ENCODE measurements at regions of chr6 and their contacts with region 1.

Region 1: GRCh38 chr6:27479319-27480182 is 6.6 kb upstream of the ZNF184 start:
- DNase-seq: peak; percentile 90
- H3K4me3 Mint-ChIP-seq: no peak overlapping the region
- H3K27ac Mint-ChIP-seq: no peak overlapping the region
- H3K4me1 Mint-ChIP-seq: peaks cover 6% of the 10 kb centered on the region
- H3K27me3 Mint-ChIP-seq: no peaks in the 10 kb centered on the region

Region 2: DNA sequence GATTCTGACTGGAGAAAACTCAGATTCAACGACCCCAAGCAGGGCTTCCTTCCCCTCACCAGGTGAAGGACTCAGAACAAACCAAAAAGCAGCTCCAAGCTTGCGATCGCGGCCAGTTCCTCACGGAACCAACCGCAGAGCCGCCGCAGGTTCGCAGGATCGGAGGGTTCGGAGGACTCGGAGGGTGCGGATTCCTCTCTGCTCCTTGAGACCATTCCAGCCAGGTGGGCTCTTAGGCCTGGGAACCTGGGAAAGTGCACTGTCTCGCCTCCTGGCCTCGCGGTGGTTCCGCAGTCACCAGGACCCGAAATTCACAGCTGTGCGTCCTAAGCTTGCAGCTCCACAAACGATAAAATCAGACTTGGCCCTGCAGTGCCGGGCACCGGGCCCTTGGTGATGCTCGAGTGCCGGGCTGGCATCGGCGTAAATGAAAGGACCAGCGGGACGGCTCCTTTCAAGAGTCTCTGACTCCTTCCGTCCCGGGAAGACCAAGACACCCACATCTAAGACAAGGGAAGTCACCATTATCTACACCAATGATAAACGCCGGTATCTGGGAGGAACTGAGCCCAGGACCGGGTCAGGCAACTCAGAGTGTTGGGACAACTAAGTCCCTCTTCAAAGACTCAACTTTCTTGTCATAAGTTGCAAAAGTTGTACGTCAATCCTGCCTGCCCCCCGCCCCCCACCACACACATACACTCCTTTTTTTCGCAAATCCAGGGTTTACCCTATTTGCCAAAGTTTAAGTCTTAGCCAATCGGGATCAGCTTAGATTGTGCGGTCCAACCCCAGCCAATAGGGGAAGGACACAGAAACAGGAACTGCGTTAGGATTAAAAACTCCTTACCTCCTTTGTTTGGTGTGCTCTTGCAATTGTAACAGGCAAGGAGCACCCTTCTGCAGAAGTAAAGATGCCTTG is 301.8 kb before region 1 on chr6:
- CTCF ChIA-PET with region 1: no interaction called
- intact Hi-C with region 1: loop called (anchors 2 kb)
- DNase-seq: peak; percentile 83
- H3K4me3 Mint-ChIP-seq: peak overlapping the region; percentile 92
- H3K27ac Mint-ChIP-seq: peak overlapping the region; percentile 87
- H3K4me1 Mint-ChIP-seq: peaks cover 4% of the 10 kb centered on the region
- H3K27me3 Mint-ChIP-seq: peaks cover 6% of the 10 kb centered on the region

Region 3: DNA sequence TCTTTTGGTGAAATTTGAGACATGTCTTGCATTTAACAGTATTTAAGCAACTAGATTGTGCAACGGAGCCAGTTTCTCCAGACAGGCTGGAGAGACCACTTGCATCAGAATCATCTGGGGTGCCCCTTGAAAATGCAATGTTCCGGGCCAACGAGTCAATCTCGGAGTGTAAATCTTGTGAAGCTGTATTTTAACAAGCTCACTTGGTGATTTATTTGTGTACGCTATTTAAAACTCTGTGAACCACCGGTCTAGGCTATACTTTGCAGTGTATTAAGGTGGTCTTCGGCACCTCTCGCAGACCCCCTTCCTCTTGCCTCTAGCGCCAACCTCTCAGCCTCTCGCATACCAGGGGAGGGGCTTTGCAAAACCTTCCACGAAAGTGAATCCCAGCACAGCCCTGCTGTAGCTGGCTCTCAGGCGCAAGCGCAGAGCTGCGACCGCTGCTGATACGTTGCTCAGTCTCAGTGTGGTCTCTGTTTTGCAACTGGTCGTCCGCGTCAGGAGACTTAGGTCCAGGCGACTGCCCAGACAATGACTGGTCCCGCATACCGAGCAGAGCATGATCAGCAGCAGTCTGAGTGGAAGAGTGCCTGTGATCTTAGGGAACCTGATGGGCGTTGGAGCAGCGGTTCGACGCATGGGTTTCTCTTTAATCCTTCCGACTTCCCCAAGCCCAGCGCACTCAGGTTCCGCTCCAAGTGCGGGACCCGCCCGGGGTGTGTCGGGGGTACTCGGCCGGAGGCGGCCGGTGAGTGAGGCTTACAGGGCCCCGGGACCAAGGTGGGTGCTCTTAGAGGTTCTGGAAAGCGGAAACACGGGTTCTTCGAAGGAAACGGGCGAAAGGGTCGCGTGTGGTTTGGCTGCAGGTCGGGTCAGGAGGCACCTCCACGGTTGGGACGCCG is 91.0 kb before region 1 on chr6 and contains the start of gene ZNF391:
- CTCF ChIA-PET with region 1: no interaction called
- intact Hi-C with region 1: loop called (anchors 2 kb)
- DNase-seq: peak; percentile 74
- H3K4me3 Mint-ChIP-seq: peak within 1 kb of the TSS; percentile 92
- H3K27ac Mint-ChIP-seq: peak within 1 kb of the TSS; percentile 91
- H3K4me1 Mint-ChIP-seq: peaks cover 8% of the 10 kb centered on the region
- H3K27me3 Mint-ChIP-seq: no peaks in the 10 kb centered on the region
- total RNA-seq, gene ZNF391: 3.1 to 3.3 TPM

Region 4: DNA sequence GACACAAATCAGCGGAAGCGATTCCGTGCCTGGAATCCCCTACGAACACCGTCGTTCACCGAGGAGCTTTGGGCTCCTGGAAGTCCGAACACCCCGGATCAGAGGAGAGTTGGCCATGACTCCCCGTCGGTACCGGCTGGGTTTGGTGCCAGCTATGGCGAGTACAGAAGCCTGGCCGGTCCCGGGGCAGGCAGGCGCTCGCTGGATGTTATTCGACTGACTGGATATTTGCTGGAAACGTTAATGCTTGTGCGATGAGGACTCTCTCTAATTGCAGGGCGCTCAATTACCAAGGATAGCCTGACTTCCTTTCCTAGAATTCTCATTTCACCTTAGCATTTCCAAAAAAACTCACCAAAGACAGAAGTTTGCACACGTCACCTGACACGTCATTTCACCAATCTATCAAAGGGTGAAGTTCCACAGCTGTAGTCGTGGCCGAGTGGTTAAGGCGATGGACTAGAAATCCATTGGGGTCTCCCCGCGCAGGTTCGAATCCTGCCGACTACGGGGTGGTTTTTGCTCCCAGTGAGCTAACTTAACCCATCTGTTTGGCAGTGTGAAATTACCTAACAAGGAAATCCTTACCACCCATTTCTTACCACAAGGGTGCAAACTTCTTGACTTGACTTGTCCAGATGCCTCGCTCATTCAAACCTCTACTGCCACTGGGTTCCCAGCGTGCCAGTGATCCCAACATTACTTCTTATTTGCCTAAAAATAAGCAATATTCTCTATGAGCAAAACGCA is 16.0 kb after region 1 on chr6:
- CTCF ChIA-PET with region 1: no interaction called
- intact Hi-C with region 1: loop called (anchors 1 kb)
- DNase-seq: peak; percentile 87
- H3K4me3 Mint-ChIP-seq: peak overlapping the region; percentile 81
- H3K27ac Mint-ChIP-seq: peak overlapping the region; percentile 78
- H3K4me1 Mint-ChIP-seq: peaks cover 14% of the 10 kb centered on the region
- H3K27me3 Mint-ChIP-seq: peaks cover 31% of the 10 kb centered on the region

Region 5: DNA sequence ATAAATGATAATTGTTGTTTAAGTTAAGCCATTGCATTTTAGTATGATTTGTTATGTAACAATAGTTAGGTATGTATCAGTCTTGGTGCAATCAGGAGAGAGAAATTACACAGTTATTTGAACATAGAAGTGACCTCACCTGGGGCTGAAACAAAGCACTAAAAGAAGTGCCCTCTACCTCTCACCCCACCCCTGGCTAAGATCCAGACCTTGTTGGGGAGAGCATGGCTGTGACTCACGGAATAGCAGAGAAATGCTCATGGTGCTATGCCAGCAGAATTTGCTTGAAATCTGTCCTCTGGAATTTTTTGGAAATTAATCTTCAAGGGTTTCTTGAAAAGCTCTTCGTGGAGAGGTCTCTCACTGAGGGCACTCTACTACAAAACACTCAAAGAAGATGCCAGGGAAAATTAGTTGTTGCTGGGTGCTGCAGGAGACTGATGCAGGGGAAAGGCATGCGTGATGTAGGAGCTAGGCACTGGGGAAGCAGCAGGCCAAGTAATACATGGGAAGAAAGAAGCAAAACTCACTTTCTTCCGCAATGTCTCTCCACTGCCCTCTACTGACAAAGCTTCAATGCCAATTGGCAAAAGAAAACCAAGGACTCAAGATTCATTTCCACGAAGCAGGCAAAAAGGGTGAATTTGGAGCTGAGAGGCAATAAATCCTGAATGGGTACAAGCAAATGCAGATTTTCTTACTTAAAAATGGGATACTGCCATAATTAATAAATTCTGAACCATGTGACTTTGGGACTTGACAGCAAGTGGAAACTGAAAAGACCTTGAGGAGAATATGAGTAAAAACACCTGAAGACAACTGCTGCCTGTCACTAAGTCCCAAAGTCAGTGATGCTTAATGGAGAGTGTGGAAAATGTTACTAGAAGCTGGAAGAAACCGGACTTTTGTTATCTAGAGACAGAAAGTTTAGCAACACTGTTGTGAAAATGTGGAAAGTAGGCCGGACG is 129.6 kb after region 1 on chr6:
- CTCF ChIA-PET with region 1: no interaction called
- intact Hi-C with region 1: no loop called
- DNase-seq: peak; percentile 30
- H3K4me3 Mint-ChIP-seq: no peak overlapping the region
- H3K27ac Mint-ChIP-seq: no peak overlapping the region
- H3K4me1 Mint-ChIP-seq: peaks cover 13% of the 10 kb centered on the region
- H3K27me3 Mint-ChIP-seq: peaks cover 51% of the 10 kb centered on the region

Region 6: GRCh38 chr6:28802417-28803336 is 1323.1 kb after region 1 on chr6:
- CTCF ChIA-PET with region 1: no interaction called
- intact Hi-C with region 1: no loop called
- DNase-seq: no peak
- H3K4me3 Mint-ChIP-seq: no peak overlapping the region
- H3K27ac Mint-ChIP-seq: no peak overlapping the region
- H3K4me1 Mint-ChIP-seq: peaks cover 1% of the 10 kb centered on the region
- H3K27me3 Mint-ChIP-seq: peaks cover 66% of the 10 kb centered on the region